WTC11 (cell line): ENCODE measurements at regions of chr7 and their contacts with region 1.

Region 1: DNA sequence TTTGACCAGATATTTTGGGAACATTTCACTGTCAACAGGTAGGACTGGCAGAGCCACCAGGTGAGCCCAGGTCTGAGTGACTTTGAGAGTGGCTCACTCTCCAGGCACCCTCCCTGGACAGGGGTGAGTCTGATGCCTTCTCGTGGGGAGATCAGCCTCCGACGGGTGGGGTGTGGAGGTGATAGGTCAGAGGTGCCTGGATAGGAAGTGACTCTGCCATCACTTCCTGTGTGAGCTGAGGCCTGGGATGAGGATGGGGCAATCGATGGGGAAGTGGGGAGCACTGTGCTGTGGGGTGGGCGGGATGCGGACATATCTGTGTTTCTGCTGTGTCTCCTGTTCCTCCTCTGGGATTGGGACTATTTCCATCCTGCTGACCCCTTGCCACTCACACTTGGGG is 34.6 kb downstream of the IFT22 start:
- DNase-seq: no peak
- ATAC-seq: no peak
- H3K4me3 Mint-ChIP-seq: no peak overlapping the region
- H3K27ac Mint-ChIP-seq: peak overlapping the region; percentile 68
- H3K4me1 Mint-ChIP-seq: peaks cover 43% of the 10 kb centered on the region
- H3K27me3 Mint-ChIP-seq: no peaks in the 10 kb centered on the region; the same call in 1 of the 2 replicates
- CTCF ChIP-seq: no peak

Region 2: DNA sequence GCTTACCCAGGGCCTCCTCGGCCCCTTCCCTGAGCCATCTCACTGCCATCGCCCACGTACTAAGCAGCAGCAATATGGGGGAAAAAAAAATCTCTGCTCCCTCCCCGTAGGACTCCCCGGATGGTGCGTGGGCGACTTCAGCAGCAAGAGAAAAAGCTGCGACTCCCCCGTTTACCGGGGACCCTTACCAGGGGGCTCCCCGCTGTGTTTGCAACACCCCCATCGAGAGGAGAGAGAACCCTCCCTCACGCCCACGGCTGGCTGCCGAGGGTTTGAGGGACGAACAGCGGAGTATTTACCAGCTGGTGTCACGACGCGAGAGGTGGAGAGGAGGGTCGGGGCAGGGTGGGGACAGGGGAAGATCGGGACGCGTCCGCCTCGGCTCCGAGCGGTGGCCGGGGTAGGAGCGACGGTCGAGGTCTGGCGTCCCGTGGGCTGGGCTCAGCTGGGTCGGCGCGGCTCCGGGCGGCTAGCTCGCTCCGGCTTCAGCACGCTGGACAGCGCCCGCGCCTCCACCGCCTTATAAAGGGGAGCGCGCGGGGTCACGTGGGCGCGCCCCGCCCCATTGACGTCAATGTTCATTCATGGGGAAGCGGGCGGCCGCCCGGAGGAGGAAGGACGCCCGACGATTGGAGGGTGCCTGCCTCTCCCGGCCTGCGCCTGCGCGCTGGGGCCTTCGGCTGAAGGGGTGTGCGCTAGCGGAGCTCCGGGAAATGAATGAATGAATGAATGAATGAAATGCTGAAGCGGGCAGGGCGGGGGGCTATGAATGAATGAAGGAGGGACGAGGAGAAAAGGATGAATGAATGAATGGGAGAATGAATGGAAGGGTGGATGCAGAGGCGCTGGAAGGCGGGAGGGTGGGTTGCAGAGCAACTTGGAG is 121.7 kb before region 1 on chr7 and contains the start of gene VGF:
- CTCF ChIA-PET with region 1: interaction called, 16 read pairs
- POLR2A ChIA-PET with region 1: no interaction called
- DNase-seq: peak; percentile 98
- ATAC-seq: peak; percentile 46
- H3K4me3 Mint-ChIP-seq: peak within 1 kb of the TSS; percentile 81
- H3K27ac Mint-ChIP-seq: peak within 1 kb of the TSS; percentile 20; the same call in 1 of the 2 replicates
- H3K4me1 Mint-ChIP-seq: peaks cover 65% of the 10 kb centered on the region
- H3K27me3 Mint-ChIP-seq: peaks cover 67% of the 10 kb centered on the region
- CTCF ChIP-seq: no peak
- total RNA-seq, gene VGF: 5.2 to 6.4 TPM (median 5.6 TPM) in 3 replicates

Region 3: GRCh38 chr7:101201695-101202604 is 85.1 kb before region 1 on chr7:
- CTCF ChIA-PET with region 1: interaction called, 16 read pairs
- POLR2A ChIA-PET with region 1: interaction called, 5 read pairs
- DNase-seq: peak; percentile 56
- ATAC-seq: peak; percentile 62
- H3K4me3 Mint-ChIP-seq: peak overlapping the region; percentile 72
- H3K27ac Mint-ChIP-seq: no peak overlapping the region
- H3K4me1 Mint-ChIP-seq: peaks cover 28% of the 10 kb centered on the region
- H3K27me3 Mint-ChIP-seq: peaks cover 16% of the 10 kb centered on the region
- CTCF ChIP-seq: no peak

Region 4: GRCh38 chr7:101235050-101235449 is 52.0 kb before region 1 on chr7:
- CTCF ChIA-PET with region 1: interaction called, 80 read pairs
- POLR2A ChIA-PET with region 1: interaction called, 6 read pairs
- DNase-seq: peak; percentile 55
- ATAC-seq: peak; percentile 10; the same call in 1 of the 2 replicates
- H3K4me3 Mint-ChIP-seq: no peak overlapping the region
- H3K27ac Mint-ChIP-seq: peak overlapping the region; percentile 83; the same call in 1 of the 2 replicates
- H3K4me1 Mint-ChIP-seq: peaks cover 39% of the 10 kb centered on the region
- H3K27me3 Mint-ChIP-seq: no peaks in the 10 kb centered on the region
- CTCF ChIP-seq: no peak; the same call in 1 of the 2 replicates

Region 5: GRCh38 chr7:101299511-101300464 is 12.8 kb after region 1 on chr7:
- CTCF ChIA-PET with region 1: interaction called, 17 read pairs
- POLR2A ChIA-PET with region 1: no interaction called
- DNase-seq: peak; percentile 70
- ATAC-seq: peak; percentile 38
- H3K4me3 Mint-ChIP-seq: peak overlapping the region; percentile 81
- H3K27ac Mint-ChIP-seq: peak overlapping the region; percentile 96
- H3K4me1 Mint-ChIP-seq: peaks cover 55% of the 10 kb centered on the region
- H3K27me3 Mint-ChIP-seq: no peaks in the 10 kb centered on the region
- CTCF ChIP-seq: no peak

Region 6: DNA sequence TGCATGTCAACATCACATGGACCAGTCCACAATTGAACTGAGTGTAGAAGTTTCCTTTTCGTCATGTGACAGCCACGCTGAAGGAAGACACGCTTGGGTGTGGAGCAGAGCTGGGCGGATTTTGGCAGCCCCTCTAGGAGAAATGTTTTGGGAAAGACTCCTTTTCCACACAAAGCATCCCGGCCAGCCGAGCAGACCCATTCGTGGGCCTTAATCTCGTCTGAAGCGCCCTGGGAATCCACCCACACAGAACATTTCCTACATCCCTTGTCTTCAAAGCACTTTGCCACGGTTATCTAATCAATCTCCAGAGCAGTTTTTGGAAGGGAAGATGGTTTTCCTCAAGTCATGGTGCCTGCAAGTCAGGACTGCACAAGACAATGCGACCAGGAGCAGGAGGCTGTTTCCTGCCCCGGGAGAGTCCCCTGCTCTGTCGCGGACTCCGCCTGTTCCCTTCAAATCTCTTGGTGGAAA is 43.0 kb after region 1 on chr7:
- CTCF ChIA-PET with region 1: no interaction called
- POLR2A ChIA-PET with region 1: no interaction called
- DNase-seq: no peak
- ATAC-seq: no peak
- H3K4me3 Mint-ChIP-seq: no peak overlapping the region
- H3K27ac Mint-ChIP-seq: no peak overlapping the region
- H3K4me1 Mint-ChIP-seq: no peaks in the 10 kb centered on the region
- H3K27me3 Mint-ChIP-seq: peaks cover 3% of the 10 kb centered on the region; the same call in 1 of the 2 replicates
- CTCF ChIP-seq: no peak